SK-N-SH (cell line): ENCODE measurements at regions of chr3 and their contacts with region 1.

Region 1: DNA sequence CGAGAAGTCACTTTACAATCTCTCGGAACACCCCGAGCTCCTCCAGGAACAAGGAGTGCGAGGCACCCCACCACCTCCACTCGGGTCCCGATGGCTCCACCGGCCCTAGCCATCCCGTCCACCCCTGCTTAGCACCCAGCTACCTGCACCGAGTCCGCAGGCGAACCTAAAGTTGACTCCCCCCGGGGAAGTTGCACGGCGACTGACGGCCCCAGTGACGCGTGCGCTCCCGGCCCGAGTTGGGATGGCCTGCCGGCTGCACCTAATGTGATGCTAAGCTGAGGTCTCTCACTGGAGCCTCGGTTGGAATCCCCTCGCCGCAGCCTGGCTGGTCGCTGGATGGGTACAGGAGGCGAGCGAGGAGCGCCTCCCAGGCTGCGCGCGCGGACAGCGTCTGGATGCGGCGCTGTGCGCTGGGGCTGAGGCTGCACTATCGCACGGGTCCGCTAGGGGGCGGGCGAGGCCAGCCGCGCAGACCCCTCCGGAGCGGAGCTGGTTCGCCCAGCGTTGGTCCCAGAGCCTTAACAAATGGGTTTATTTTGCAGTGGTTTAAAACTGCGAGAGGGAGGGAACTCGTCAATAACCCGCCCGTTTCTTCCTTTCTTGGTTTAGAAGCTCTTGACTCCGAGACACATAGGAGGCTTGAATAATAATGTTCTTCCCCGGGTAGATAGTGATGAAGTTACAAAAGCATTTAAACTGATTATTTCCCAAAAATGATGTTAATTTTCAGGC is at the start of gene OXTR:
- DNase-seq: peak; percentile 96
- H3K4me3 ChIP-seq: peak within 1 kb of the TSS; percentile 49 to 61
- H3K27ac ChIP-seq: 0 out of 4 replicates have a peak within 1 kb of the TSS, but pooled peaks of 1 of the 2 experiments have one; percentile 2
- H3K4me1 ChIP-seq: peaks cover 0 to 16% of the 10 kb centered on the region in 2 experiments; a peak in 3 of 4 replicates
- H3K27me3 ChIP-seq: no peaks in the 10 kb centered on the region
- CTCF ChIP-seq: peak; percentile 96
- EP300 ChIP-seq: no peak
- RAD21 ChIP-seq: peak; percentile 91
- polyA plus RNA-seq, gene OXTR: 1.8 and 2.5 TPM in 2 replicates

Region 2: DNA sequence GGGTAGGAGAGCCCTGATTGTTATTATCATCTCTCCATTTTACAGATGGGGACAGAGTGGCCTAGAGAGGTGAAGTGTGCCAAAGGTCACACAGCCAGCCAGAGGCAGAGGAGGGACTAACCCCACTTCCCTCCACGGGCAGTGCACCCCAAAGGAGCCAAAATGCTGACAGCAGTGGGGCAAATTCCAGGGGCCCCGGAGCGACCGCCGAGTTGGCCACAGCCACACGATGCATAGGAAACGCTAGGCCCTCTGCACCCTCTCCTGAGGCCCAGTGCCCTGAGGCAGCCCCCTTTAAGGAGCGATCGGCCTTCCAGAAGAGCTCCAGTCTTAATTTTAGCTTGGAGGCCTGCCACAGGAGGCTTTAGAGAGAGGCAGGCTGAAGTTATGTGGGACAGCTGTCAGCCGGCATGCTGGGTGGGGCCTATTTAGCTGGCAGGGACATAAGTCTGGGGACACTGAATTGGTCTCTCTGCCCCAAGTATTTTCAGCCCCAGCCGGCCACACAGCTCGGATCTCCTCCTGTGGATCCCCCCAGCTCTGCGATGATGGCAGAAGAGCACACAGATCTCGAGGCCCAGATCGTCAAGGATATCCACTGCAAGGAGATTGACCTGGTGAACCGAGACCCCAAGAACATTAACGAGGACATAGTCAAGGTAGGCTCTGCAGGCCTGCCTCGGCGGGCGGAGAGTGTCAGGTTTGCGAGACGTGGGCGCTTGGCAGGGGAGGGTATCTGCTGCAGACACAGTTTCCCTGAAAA is 35.7 kb before region 1 on chr3 and contains the start of gene CAV3:
- CTCF ChIA-PET with region 1: interaction called, 23 read pairs
- POLR2A ChIA-PET with region 1: no interaction called
- DNase-seq: no peak
- H3K4me3 ChIP-seq: no peak within 1 kb of the TSS
- H3K27ac ChIP-seq: no peak within 1 kb of the TSS
- H3K4me1 ChIP-seq: no peaks in the 10 kb centered on the region
- H3K27me3 ChIP-seq: no peaks in the 10 kb centered on the region
- CTCF ChIP-seq: no peak
- EP300 ChIP-seq: no peak
- RAD21 ChIP-seq: no peak
- polyA plus RNA-seq, gene CAV3: not detected in 2 replicates

Region 3: GRCh38 chr3:8784676-8785435 is 15.6 kb after region 1 on chr3:
- CTCF ChIA-PET with region 1: interaction called, 53 read pairs
- POLR2A ChIA-PET with region 1: no interaction called
- DNase-seq: peak; percentile 59
- H3K4me3 ChIP-seq: no peak overlapping the region
- H3K27ac ChIP-seq: peak overlapping the region in 1 of 2 experiments; percentile 96; a peak in 2 of 4 replicates
- H3K4me1 ChIP-seq: peaks cover 0 to 21% of the 10 kb centered on the region in 2 experiments; a peak in 2 of 4 replicates
- H3K27me3 ChIP-seq: no peaks in the 10 kb centered on the region
- CTCF ChIP-seq: no peak
- EP300 ChIP-seq: peak in 1 of 2 experiments; percentile 90; a peak in 2 of 4 replicates
- RAD21 ChIP-seq: no peak

Region 4: GRCh38 chr3:8891774-8892173 is 122.5 kb after region 1 on chr3:
- CTCF ChIA-PET with region 1: interaction called, 14 read pairs
- POLR2A ChIA-PET with region 1: no interaction called
- DNase-seq: no peak
- H3K4me3 ChIP-seq: no peak overlapping the region
- H3K27ac ChIP-seq: peak overlapping the region; percentile 68 to 73
- H3K4me1 ChIP-seq: peaks cover 12 to 31% of the 10 kb centered on the region in 2 experiments
- H3K27me3 ChIP-seq: no peaks in the 10 kb centered on the region
- CTCF ChIP-seq: no peak
- EP300 ChIP-seq: peak in 1 of 2 experiments; percentile 60; a peak in 1 of 4 replicates
- RAD21 ChIP-seq: no peak

Region 5: DNA sequence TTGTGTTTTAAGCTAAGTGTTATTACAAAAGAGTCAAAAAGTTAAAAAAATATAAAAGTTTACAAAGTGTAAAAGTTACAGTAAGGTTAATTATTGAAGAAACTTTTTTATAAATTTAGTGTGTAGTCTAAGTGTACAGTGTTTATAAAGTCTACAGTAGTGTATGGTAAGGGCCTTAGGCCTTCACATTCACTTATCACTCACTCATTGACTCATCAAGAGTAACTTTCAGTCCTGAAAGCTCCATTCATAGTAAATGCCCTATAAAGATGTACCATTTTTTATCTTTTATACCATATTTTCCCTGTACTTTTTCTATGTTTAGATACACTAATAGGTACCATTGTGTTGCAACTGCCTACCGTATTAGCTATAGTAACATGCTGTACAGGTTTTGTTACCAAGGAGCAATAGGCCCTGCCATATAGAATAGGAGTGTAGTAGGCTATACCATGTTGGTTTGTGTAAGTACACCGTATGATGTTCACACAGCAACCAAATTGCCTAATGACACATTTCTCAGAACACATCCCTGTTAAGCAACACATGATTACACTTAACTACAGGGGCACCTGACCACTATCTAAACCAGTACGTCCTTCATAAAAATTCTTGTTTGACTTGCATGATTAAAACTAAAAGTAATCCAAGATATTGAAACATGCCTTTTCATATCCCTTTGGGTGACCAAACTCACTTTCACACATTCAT is 176.8 kb after region 1 on chr3:
- CTCF ChIA-PET with region 1: interaction called, 13 read pairs
- POLR2A ChIA-PET with region 1: no interaction called
- DNase-seq: no peak
- H3K4me3 ChIP-seq: no peak overlapping the region
- H3K27ac ChIP-seq: no peak overlapping the region
- H3K4me1 ChIP-seq: peaks cover 3 to 4% of the 10 kb centered on the region in 2 experiments; a peak in 2 of 4 replicates
- H3K27me3 ChIP-seq: no peaks in the 10 kb centered on the region
- CTCF ChIP-seq: no peak
- EP300 ChIP-seq: no peak
- RAD21 ChIP-seq: no peak

Region 6: GRCh38 chr3:9183811-9184460 is 414.7 kb after region 1 on chr3:
- CTCF ChIA-PET with region 1: no interaction called
- POLR2A ChIA-PET with region 1: no interaction called
- DNase-seq: no peak
- H3K4me3 ChIP-seq: no peak overlapping the region
- H3K27ac ChIP-seq: no peak overlapping the region
- H3K4me1 ChIP-seq: peaks cover 0 to 6% of the 10 kb centered on the region in 2 experiments; a peak in 1 of 4 replicates
- H3K27me3 ChIP-seq: no peaks in the 10 kb centered on the region
- CTCF ChIP-seq: no peak
- EP300 ChIP-seq: no peak
- RAD21 ChIP-seq: no peak